ENCODE measurements at regions of chr17 and their contacts with region 1.

Region 1: GRCh38 chr17:75059369-75060345 is 12.6 kb downstream of the KCTD2 start:
- DNase-seq: no peak
- CTCF ChIP-seq: peak; percentile 41

Region 2: DNA sequence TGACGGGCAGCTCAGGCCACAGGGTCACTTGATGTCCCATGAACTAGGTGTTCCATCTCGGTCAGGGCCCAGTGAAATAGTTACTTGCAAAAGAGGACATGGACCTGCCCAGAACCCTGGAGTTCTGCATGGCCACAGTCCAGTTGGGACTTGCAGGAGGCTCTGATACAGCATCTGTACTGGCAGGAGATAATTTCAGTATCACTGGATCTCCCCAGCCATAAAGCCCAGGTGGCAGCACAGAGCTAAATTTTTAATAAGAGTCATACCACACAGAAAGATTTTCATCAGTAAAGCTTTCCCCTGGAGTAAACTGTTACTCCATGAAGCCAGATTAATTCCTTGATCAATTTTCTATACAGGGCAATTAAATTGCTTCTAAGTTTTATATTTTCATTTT is 10.1 kb after region 1 on chr17:
- CTCF ChIA-PET with region 1: interaction called, 12 read pairs
- POLR2A ChIA-PET with region 1: no interaction called
- DNase-seq: no peak
- CTCF ChIP-seq: peak; percentile 35

Region 3: DNA sequence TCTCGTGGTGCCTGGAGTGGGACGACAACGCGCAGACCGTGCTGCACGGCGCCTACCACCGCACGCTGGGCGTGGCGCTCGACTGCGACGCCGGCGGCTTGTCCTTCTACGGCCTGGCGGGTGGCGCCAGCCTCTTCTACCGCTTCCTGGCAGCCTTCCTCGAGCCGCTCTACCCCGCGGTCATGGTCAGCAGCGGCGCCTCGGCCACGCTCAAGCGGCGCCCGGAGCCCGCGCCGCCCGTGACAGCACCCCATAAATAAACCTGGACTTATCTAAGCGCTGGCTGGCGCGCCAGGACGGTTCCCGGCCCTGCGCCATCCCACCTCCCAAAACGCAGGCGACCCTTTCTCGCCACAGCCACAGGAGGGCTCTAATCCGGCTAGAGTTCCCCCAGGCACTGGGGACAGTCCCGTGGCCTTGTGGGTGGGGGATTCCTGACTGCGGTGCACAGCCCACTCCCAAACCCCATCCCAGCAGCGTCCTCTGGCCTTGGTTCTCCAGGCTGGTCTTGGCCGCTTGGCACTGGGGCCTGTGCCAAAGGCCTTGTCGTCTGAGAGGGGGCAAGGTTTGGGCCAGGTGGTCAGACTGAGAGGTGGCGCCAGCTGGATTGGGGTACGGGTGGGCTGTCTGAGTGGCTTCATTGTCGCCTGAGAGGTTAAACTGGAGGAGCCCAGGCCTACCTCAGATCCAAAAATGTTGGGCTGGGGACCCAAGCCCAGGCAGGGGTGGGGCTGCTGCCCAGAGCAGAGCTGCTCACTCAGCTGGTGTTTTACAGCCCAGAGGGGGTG is 18.0 kb after region 1 on chr17:
- CTCF ChIA-PET with region 1: interaction called, 15 read pairs
- POLR2A ChIA-PET with region 1: no interaction called
- DNase-seq: peak; percentile 75
- CTCF ChIP-seq: peak; percentile 40

Region 4: GRCh38 chr17:75131280-75132017 is 71.8 kb after region 1 on chr17 and contains the start of gene NT5C:
- CTCF ChIA-PET with region 1: interaction called, 21 read pairs
- POLR2A ChIA-PET with region 1: interaction called, 3 read pairs
- DNase-seq: peak; percentile 92
- CTCF ChIP-seq: peak; percentile 73

Region 5: GRCh38 chr17:75163074-75163473 is 103.4 kb after region 1 on chr17:
- CTCF ChIA-PET with region 1: no interaction called
- POLR2A ChIA-PET with region 1: no interaction called
- DNase-seq: no peak
- CTCF ChIP-seq: no peak